ENCODE measurements at regions of chr7 and their contacts with region 1.

Region 1: DNA sequence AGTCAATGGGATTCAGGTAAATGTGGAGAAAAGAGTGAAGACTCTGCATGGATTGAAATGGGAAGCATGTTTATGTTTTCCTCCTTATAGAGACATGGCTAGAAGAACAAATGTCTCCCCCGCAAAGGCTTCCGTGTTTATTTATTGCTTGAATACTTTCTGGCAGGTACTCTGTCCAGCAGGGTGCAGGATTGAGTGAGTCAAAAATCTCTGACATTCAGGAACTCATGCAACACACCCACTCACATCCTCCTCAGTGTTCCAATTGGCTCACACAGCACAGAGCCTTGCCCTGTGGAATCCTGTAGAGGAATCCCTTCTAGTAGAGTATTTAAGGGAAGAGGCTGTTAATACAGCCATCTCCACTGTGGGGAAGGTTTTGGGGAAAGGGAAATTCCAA is 290.3 kb upstream of the VWC2 start:
- DNase-seq: peak in 1 of 2 donors; percentile 6
- ATAC-seq: peak in 5 of 8 donors; percentile 67 to 87 (median 76)
- H3K4me3 ChIP-seq: no peak overlapping the region
- H3K27ac ChIP-seq: no peak overlapping the region
- H3K4me1 ChIP-seq: peaks cover 0 to 8% (median 0%) of the 10 kb centered on the region in 9 donors
- H3K27me3 ChIP-seq: no peaks in the 10 kb centered on the region
- CTCF ChIP-seq: peak in 7 of 9 donors; percentile 11 to 60 (median 43)

Region 2: GRCh38 chr7:49244543-49244942 is 238.6 kb before region 1 on chr7:
- intact Hi-C with region 1: no loop called
- DNase-seq: no peak
- ATAC-seq: no peak
- H3K4me3 ChIP-seq: no peak overlapping the region
- H3K27ac ChIP-seq: no peak overlapping the region
- H3K4me1 ChIP-seq: no peaks in the 10 kb centered on the region
- H3K27me3 ChIP-seq: no peaks in the 10 kb centered on the region
- CTCF ChIP-seq: no peak

Region 3: GRCh38 chr7:49635800-49636199 is 152.7 kb after region 1 on chr7:
- intact Hi-C with region 1: loop called in 1 of 10 experiments (anchors 10 kb)
- DNase-seq: no peak
- ATAC-seq: no peak
- H3K4me3 ChIP-seq: no peak overlapping the region
- H3K27ac ChIP-seq: no peak overlapping the region
- H3K4me1 ChIP-seq: peaks cover 0 to 20% (median 9%) of the 10 kb centered on the region in 9 donors
- H3K27me3 ChIP-seq: no peaks in the 10 kb centered on the region
- CTCF ChIP-seq: peak in 8 of 9 donors; percentile 8 to 37 (median 19)

Region 4: GRCh38 chr7:49776994-49777393 is 293.9 kb after region 1 on chr7:
- intact Hi-C with region 1: loop called in 3 of 10 experiments (anchors 5 to 10 kb)
- DNase-seq: peak in 1 of 2 donors; percentile 27
- ATAC-seq: peak in 3 of 8 donors; percentile 23 to 34 (median 31)
- H3K4me3 ChIP-seq: peak overlapping the region in 3 of 10 donors; percentile 6 to 72 (median 67)
- H3K27ac ChIP-seq: peak overlapping the region in 8 of 10 donors; percentile 22 to 96 (median 62)
- H3K4me1 ChIP-seq: peaks cover 4 to 72% (median 21%) of the 10 kb centered on the region in 9 donors
- H3K27me3 ChIP-seq: peaks cover 0 to 65% (median 35%) of the 10 kb centered on the region in 7 donors
- CTCF ChIP-seq: peak in 7 of 9 donors; percentile 32 to 58 (median 46)

Region 5: DNA sequence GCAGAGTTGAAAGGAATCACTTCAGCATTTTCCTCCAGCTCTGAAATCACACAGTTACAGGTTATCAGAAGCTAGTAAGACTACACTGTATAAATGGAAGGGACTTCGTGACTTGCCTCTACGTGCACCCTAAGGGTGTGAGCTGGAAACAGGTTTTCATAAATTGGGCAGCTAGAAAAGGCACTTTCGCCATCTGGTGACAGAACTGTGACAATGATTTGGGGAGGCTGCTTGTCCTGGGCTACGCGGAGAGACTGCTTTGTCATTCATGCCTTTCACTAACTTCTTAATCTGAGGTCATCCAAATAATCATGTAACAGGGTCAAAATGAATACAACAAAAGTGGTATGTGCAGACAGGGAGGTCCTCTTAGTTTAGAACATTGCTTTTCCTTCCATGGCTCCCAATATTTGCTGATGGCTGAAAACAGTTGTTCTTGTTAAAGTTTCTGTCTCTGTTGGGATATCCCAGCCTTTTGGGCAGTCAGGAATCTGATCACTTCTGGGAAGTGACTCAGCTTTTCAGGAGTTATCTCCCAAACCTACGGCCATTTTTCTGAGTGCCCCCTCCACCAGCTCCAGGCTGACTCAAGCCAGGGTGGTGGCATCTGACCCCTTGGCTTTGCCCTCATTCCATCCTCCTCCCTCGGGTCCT is 308.1 kb after region 1 on chr7:
- intact Hi-C with region 1: loop called in 8 of 10 experiments (anchors 2 to 10 kb)
- DNase-seq: peak in 1 of 2 donors; percentile 33
- ATAC-seq: peak; percentile 75 to 88 (median 79)
- H3K4me3 ChIP-seq: no peak overlapping the region
- H3K27ac ChIP-seq: peak overlapping the region in 6 of 10 donors; percentile 17 to 60 (median 35)
- H3K4me1 ChIP-seq: peaks cover 0 to 41% (median 14%) of the 10 kb centered on the region in 9 donors
- H3K27me3 ChIP-seq: no peaks in the 10 kb centered on the region
- CTCF ChIP-seq: peak; percentile 13 to 69 (median 51)

Region 6: DNA sequence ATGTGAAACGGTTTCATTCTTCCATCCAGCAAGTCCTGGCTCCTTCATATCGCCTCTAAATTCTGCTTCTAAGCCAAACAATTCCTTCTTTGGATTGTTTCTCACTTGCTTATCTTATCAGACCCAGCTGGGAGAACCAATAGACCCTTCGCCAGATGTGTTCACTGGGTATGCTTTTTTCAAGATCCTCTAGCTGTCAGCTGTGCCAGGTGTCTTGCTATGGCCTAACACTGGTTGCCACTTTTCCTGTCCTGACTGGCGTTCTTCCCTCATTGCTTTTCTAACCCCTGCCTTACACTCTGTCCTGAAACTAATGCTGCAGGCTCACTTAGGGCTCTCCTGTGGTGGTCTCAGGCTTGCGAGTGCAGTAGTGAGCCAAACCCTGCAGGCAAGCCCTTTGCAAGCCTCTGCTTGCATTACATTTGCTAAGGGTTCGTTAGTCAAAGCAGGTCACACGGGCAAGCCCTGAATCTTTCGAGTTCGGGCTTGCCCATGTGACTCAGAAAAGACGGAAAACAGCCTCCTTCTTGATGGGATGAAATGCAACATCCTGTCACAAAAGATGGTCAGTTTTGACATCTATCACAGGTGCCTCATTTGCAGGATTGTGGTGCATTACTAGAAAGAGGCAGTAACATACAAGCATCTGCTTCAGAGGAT is 383.1 kb after region 1 on chr7:
- intact Hi-C with region 1: loop called in 1 of 10 experiments (anchors 10 kb)
- DNase-seq: no peak
- ATAC-seq: peak in 7 of 8 donors; percentile 46 to 91 (median 81)
- H3K4me3 ChIP-seq: no peak overlapping the region
- H3K27ac ChIP-seq: no peak overlapping the region
- H3K4me1 ChIP-seq: peaks cover 0 to 22% (median 7%) of the 10 kb centered on the region in 9 donors
- H3K27me3 ChIP-seq: no peaks in the 10 kb centered on the region
- CTCF ChIP-seq: no peak